ENCODE measurements at regions of chr15 and their contacts with region 1.

Region 1: GRCh38 chr15:65384895-65385858 is 7.4 kb upstream of the IGDCC3 start:
- DNase-seq: peak; percentile 83
- H3K4me3 Mint-ChIP-seq: peak overlapping the region; percentile 78
- H3K27ac Mint-ChIP-seq: no peak overlapping the region
- H3K4me1 Mint-ChIP-seq: peaks cover 9% of the 10 kb centered on the region
- H3K27me3 Mint-ChIP-seq: peaks cover 35% of the 10 kb centered on the region

Region 2: GRCh38 chr15:65146438-65146837 is 238.7 kb before region 1 on chr15:
- CTCF ChIA-PET with region 1: no interaction called
- POLR2A ChIA-PET with region 1: no interaction called
- DNase-seq: no peak
- H3K4me3 Mint-ChIP-seq: no peak overlapping the region
- H3K27ac Mint-ChIP-seq: no peak overlapping the region
- H3K4me1 Mint-ChIP-seq: no peaks in the 10 kb centered on the region
- H3K27me3 Mint-ChIP-seq: no peaks in the 10 kb centered on the region

Region 3: DNA sequence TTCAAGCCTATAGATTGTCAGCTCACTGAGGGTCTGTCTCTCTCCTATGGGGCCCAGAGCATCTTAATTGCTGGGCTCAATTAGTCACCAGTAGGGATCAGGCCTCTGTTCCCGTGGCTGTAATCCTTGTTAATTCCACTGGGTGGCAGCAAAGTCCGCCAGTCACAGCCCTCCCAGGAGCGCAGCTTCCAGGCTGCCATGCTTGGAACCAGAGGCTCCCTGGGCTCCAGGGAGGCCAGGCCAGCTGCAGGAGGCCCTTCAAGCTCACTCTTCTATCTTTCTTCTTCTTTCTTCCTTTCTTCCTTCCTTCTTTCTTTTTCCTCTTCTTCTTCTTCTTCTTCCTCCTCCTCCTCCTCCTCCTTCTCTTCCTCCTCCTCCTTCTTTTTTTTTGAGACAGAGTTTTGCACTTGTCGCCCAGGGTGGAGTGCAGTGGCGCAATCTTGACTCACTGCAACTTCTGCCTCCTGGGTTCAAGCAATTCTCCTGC is 66.3 kb before region 1 on chr15:
- CTCF ChIA-PET with region 1: interaction called, 51 read pairs
- POLR2A ChIA-PET with region 1: interaction called, 5 read pairs
- DNase-seq: peak; percentile 79
- H3K4me3 Mint-ChIP-seq: no peak overlapping the region
- H3K27ac Mint-ChIP-seq: no peak overlapping the region
- H3K4me1 Mint-ChIP-seq: no peaks in the 10 kb centered on the region
- H3K27me3 Mint-ChIP-seq: peaks cover 17% of the 10 kb centered on the region

Region 4: DNA sequence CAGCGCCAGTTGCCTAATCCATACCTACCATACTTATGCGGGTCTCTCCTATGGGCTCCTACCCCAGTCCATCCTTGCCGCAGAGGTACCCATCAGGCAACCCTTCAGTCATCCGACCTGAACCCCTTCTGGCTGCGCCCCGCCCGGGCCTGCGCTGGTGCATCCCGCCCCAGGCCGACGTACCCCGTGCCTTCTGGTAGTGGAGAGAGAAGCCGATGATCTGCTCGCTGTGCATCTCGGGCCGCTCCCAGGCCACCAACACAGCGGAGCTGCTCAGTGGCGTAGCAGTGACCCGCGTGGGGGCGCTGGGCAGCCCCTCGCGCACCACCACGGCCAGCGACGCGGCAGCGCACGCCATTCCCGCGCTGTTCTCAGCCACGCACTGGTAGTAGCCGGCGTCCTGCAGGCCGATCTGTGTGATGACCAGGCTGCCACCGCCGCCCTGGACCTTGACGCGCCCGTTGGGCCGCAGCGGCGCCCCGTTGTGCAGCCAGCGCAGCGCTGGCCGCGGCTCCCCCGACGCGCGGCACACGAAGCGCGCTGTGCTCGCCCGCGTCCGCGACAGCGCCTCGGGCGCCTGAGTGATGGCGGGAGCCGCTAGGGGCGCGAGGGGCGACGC is 10.5 kb after region 1 on chr15:
- CTCF ChIA-PET with region 1: interaction called, 17 read pairs
- POLR2A ChIA-PET with region 1: no interaction called
- DNase-seq: no peak
- H3K4me3 Mint-ChIP-seq: no peak overlapping the region
- H3K27ac Mint-ChIP-seq: no peak overlapping the region
- H3K4me1 Mint-ChIP-seq: no peaks in the 10 kb centered on the region
- H3K27me3 Mint-ChIP-seq: peaks cover 65% of the 10 kb centered on the region

Region 5: GRCh38 chr15:65400760-65401610 is 15.8 kb after region 1 on chr15:
- CTCF ChIA-PET with region 1: interaction called, 17 read pairs
- POLR2A ChIA-PET with region 1: no interaction called
- DNase-seq: peak; percentile 59
- H3K4me3 Mint-ChIP-seq: no peak overlapping the region
- H3K27ac Mint-ChIP-seq: no peak overlapping the region
- H3K4me1 Mint-ChIP-seq: no peaks in the 10 kb centered on the region
- H3K27me3 Mint-ChIP-seq: peaks cover 51% of the 10 kb centered on the region

Region 6: GRCh38 chr15:65412556-65412955 is 27.4 kb after region 1 on chr15:
- CTCF ChIA-PET with region 1: no interaction called
- POLR2A ChIA-PET with region 1: no interaction called
- DNase-seq: no peak
- H3K4me3 Mint-ChIP-seq: no peak overlapping the region
- H3K27ac Mint-ChIP-seq: no peak overlapping the region
- H3K4me1 Mint-ChIP-seq: peaks cover 2% of the 10 kb centered on the region
- H3K27me3 Mint-ChIP-seq: peaks cover 18% of the 10 kb centered on the region

Measured in activated CD4-positive, alpha-beta memory T cell treated with anti-CD3 and anti-CD28 coated beads, Interleukin-2, amount 10 ng/mL, durations not matched to agents 7 days and 5 days (primary cell).